Esophagus squamous epithelium (tissue), 5 donors: ENCODE measurements at regions of chr7 and their contacts with region 1.

Region 1: DNA sequence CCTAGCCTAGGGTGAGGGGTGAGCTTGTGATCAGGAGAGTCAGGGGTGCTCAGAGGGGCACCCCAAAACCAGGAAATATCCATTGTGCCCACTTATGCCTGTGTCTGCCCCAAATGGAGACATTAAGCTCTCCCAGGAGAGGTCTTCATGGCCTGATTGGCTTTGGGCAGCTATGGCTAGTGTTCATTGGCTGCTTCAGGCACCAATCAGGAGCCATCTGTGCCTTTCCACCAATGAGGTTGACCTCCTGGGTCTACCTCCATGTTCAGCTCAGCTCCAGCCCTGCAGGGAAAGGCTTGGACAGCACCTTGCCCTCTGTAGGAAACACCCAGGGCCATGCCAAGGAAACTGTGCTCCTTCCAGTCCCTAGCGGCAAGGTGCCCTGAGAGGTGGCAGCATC is 23.9 kb upstream of the HSPB1 start:
- DNase-seq: no peak
- H3K4me3 ChIP-seq: no peak overlapping the region
- H3K27ac ChIP-seq: no peak overlapping the region
- H3K4me1 ChIP-seq: peaks cover 10 to 31% (median 14%) of the 10 kb centered on the region in 3 donors
- H3K27me3 ChIP-seq: peaks cover 0 to 72% (median 0%) of the 10 kb centered on the region in 4 donors
- CTCF ChIP-seq: no peak
- POLR2A ChIP-seq: no peak

Region 2: DNA sequence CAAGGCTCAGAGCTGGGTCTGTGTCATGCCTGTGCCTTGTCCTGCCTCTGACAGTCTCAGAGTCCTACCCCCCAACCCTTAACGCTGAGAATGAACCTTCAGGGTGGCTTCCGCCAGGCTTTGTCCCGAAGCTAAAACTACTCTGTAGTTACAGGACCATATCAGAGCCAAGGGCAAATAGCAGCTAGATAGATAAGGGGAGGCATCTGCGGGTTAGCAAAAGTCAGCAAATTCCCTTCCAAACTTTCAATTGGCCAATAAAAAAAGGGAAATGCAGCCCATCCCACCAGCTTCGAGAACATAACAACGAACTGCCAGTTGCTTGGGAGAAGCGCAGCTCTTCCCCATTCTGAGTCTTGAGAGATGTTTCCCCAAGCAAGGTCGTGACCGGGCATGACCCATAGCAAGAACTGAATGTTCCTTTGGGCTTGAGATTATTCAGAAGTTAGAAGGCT is 482.7 kb before region 1 on chr7:
- intact Hi-C with region 1: no loop called
- DNase-seq: no peak
- H3K4me3 ChIP-seq: no peak overlapping the region
- H3K27ac ChIP-seq: peak overlapping the region in 3 of 4 donors; percentile 21 to 69 (median 53)
- H3K4me1 ChIP-seq: peaks cover 5 to 34% (median 13%) of the 10 kb centered on the region in 3 donors
- H3K27me3 ChIP-seq: no peaks in the 10 kb centered on the region
- CTCF ChIP-seq: no peak
- POLR2A ChIP-seq: no peak

Region 3: DNA sequence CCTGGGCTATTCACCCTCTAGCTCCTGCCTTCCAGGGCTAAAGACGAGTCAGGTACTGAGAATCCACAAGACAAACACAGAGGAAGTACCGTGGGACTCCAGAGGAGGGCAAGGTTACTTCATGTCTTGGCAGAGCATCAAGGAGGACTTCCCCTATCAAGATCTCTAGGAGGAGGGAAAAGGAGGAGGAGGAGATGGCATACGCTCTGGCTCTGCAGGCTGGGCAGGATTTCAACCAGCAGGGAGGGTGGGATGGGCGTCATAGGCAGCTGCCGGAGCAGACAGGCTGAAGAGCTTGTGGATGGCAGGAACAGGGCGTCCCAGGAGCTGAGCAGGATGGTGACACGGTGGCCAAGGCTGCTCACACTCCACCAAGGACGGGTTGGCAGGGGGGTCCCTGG is 209.3 kb before region 1 on chr7:
- intact Hi-C with region 1: no loop called
- DNase-seq: no peak
- H3K4me3 ChIP-seq: no peak overlapping the region
- H3K27ac ChIP-seq: peak overlapping the region in 3 of 4 donors; percentile 30 to 75 (median 71)
- H3K4me1 ChIP-seq: peaks cover 8 to 35% (median 8%) of the 10 kb centered on the region in 3 donors
- H3K27me3 ChIP-seq: no peaks in the 10 kb centered on the region
- CTCF ChIP-seq: peak in 4 of 6 experiments; percentile 30 to 77 (median 64)
- POLR2A ChIP-seq: no peak

Region 4: GRCh38 chr7:76185187-76185896 is 93.2 kb before region 1 on chr7:
- intact Hi-C with region 1: loop called (anchors 5 kb)
- DNase-seq: no peak
- H3K4me3 ChIP-seq: no peak overlapping the region
- H3K27ac ChIP-seq: no peak overlapping the region
- H3K4me1 ChIP-seq: no peaks in the 10 kb centered on the region
- H3K27me3 ChIP-seq: peaks cover 0 to 6% (median 0%) of the 10 kb centered on the region in 4 donors
- CTCF ChIP-seq: no peak
- POLR2A ChIP-seq: no peak